Activated CD4-positive, alpha-beta memory T cell treated with anti-CD3 and anti-CD28 coated beads for 36 hours (primary cell): ENCODE measurements at regions of chr18 and their contacts with region 1.

Region 1: DNA sequence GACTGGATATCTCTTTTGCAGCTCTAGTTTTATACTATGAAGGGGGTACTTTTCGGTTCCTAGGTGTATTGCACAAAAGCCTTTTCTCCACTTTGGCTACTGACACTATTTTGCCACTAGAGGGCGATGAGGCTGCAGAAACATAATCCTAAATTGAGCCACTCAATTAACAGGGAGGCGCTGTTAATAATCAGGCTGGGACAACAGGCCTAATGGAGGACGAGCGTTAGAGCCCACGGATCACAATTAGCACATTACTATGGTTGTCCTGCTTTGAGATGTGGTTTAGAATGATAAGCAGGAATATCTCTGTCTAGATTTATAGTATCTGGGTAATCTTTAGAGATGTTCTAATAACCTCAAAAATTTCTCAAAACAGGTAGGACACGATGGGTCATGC is 62.2 kb upstream of the PMAIP1 start:
- DNase-seq: peak; percentile 53
- H3K4me3 Mint-ChIP-seq: no peak overlapping the region
- H3K27ac Mint-ChIP-seq: no peak overlapping the region
- H3K4me1 Mint-ChIP-seq: peaks cover 10% of the 10 kb centered on the region
- H3K27me3 Mint-ChIP-seq: peaks cover 2% of the 10 kb centered on the region

Region 2: GRCh38 chr18:59823596-59824195 is 13.9 kb before region 1 on chr18:
- CTCF ChIA-PET with region 1: interaction called, 12 read pairs
- POLR2A ChIA-PET with region 1: no interaction called
- intact Hi-C with region 1: no loop called
- DNase-seq: peak; percentile 69
- H3K4me3 Mint-ChIP-seq: no peak overlapping the region
- H3K27ac Mint-ChIP-seq: no peak overlapping the region
- H3K4me1 Mint-ChIP-seq: no peaks in the 10 kb centered on the region
- H3K27me3 Mint-ChIP-seq: peaks cover 15% of the 10 kb centered on the region

Region 3: GRCh38 chr18:59927246-59927825 is 89.8 kb after region 1 on chr18:
- CTCF ChIA-PET with region 1: interaction called, 4 read pairs
- POLR2A ChIA-PET with region 1: no interaction called
- intact Hi-C with region 1: loop called (anchors 1 kb)
- DNase-seq: peak; percentile 72
- H3K4me3 Mint-ChIP-seq: no peak overlapping the region
- H3K27ac Mint-ChIP-seq: peak overlapping the region; percentile 75
- H3K4me1 Mint-ChIP-seq: peaks cover 37% of the 10 kb centered on the region
- H3K27me3 Mint-ChIP-seq: peaks cover 2% of the 10 kb centered on the region

Region 4: GRCh38 chr18:59957971-59958595 is 120.5 kb after region 1 on chr18:
- CTCF ChIA-PET with region 1: interaction called, 10 read pairs
- POLR2A ChIA-PET with region 1: no interaction called
- intact Hi-C with region 1: no loop called
- DNase-seq: peak; percentile 21
- H3K4me3 Mint-ChIP-seq: no peak overlapping the region
- H3K27ac Mint-ChIP-seq: no peak overlapping the region
- H3K4me1 Mint-ChIP-seq: peaks cover 23% of the 10 kb centered on the region
- H3K27me3 Mint-ChIP-seq: peaks cover 5% of the 10 kb centered on the region

Region 5: GRCh38 chr18:59971871-59972428 is 134.4 kb after region 1 on chr18:
- CTCF ChIA-PET with region 1: no interaction called
- POLR2A ChIA-PET with region 1: no interaction called
- intact Hi-C with region 1: no loop called
- DNase-seq: no peak
- H3K4me3 Mint-ChIP-seq: no peak overlapping the region
- H3K27ac Mint-ChIP-seq: no peak overlapping the region
- H3K4me1 Mint-ChIP-seq: peaks cover 10% of the 10 kb centered on the region
- H3K27me3 Mint-ChIP-seq: peaks cover 13% of the 10 kb centered on the region

Region 6: DNA sequence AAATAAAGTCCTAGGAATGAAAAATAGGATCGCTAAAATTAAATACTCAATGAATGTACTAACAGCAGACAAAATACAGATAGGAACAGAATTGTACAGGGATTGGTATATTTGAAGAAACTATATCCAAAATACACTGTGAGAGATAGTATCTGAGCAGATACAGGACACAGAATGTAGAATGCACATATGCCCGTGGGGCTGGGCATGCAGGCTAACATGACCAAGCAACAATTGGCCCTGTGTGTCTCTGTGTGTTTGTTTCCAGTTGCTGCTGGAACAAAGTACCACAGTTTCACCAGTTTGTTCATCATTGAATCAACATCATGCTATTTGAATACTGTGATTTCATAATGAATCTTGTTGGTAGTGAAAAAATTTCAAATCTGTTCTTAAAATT is 189.8 kb after region 1 on chr18:
- CTCF ChIA-PET with region 1: no interaction called
- POLR2A ChIA-PET with region 1: no interaction called
- intact Hi-C with region 1: no loop called
- DNase-seq: no peak
- H3K4me3 Mint-ChIP-seq: no peak overlapping the region
- H3K27ac Mint-ChIP-seq: no peak overlapping the region
- H3K4me1 Mint-ChIP-seq: no peaks in the 10 kb centered on the region
- H3K27me3 Mint-ChIP-seq: peaks cover 3% of the 10 kb centered on the region

Region 7: DNA sequence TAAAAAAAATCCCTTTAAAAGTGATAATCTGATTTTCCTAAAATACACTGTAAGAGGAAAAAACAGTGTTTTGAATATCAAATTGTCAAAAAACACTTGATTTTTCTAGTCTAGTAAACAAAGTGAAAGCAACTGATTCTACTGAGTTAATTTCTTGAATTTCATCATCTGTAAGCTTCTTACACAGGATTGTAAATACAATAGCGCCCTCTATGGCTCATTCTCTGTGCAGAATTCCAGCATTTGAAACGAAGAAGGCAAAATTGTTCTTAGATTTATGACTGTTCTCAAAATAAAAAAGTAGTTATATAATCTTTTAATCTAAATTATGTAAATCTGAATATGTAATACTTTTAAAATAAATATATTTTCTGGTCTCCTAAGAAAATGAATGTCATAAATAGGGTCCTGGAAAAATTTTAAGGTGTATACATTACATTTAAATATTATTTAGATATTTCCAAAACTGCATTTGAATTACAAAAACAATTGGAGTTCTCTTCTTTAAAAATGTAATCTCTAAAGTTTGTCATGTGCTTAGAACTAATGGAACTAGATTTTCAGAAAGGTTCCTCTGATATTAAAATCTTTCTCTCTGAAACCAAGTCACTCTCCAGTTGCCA is 711.9 kb after region 1 on chr18:
- CTCF ChIA-PET with region 1: no interaction called
- POLR2A ChIA-PET with region 1: no interaction called
- intact Hi-C with region 1: loop called (anchors 5 kb)
- DNase-seq: no peak
- H3K4me3 Mint-ChIP-seq: no peak overlapping the region
- H3K27ac Mint-ChIP-seq: no peak overlapping the region
- H3K4me1 Mint-ChIP-seq: no peaks in the 10 kb centered on the region
- H3K27me3 Mint-ChIP-seq: no peaks in the 10 kb centered on the region